Endothelial cell of umbilical vein (primary cell): ENCODE measurements at regions of chr21 and their contacts with region 1.

Region 1: GRCh38 chr21:15831497-15831896 is 101.7 kb downstream of the USP25 start:
- DNase-seq: no peak
- H3K4me3 ChIP-seq: no peak overlapping the region
- H3K27ac ChIP-seq: no peak overlapping the region
- H3K4me1 ChIP-seq: no peaks in the 10 kb centered on the region
- H3K27me3 ChIP-seq: no peaks in the 10 kb centered on the region
- CTCF ChIP-seq: no peak
- POLR2A ChIP-seq: no peak

Region 2: GRCh38 chr21:15508554-15508953 is 322.9 kb before region 1 on chr21:
- CTCF ChIA-PET with region 1: no interaction called
- POLR2A ChIA-PET with region 1: no interaction called
- dilution Hi-C with region 1: no loop called
- intact Hi-C with region 1: no loop called
- DNase-seq: no peak
- H3K4me3 ChIP-seq: no peak overlapping the region
- H3K27ac ChIP-seq: no peak overlapping the region
- H3K4me1 ChIP-seq: no peaks in the 10 kb centered on the region
- H3K27me3 ChIP-seq: peaks cover 1 to 2% of the 10 kb centered on the region in 2 experiments
- CTCF ChIP-seq: no peak
- POLR2A ChIP-seq: no peak

Region 3: GRCh38 chr21:15820852-15821379 is 10.6 kb before region 1 on chr21:
- CTCF ChIA-PET with region 1: interaction called, 10 read pairs
- POLR2A ChIA-PET with region 1: no interaction called
- dilution Hi-C with region 1: no loop called
- intact Hi-C with region 1: no loop called
- DNase-seq: peak; percentile 30
- H3K4me3 ChIP-seq: no peak overlapping the region
- H3K27ac ChIP-seq: no peak overlapping the region
- H3K4me1 ChIP-seq: peaks cover 20% of the 10 kb centered on the region
- H3K27me3 ChIP-seq: no peaks in the 10 kb centered on the region
- CTCF ChIP-seq: no peak
- POLR2A ChIP-seq: no peak